Motor neuron (in vitro differentiated cells): ENCODE measurements at regions of chr6 and their contacts with region 1.

Region 1: DNA sequence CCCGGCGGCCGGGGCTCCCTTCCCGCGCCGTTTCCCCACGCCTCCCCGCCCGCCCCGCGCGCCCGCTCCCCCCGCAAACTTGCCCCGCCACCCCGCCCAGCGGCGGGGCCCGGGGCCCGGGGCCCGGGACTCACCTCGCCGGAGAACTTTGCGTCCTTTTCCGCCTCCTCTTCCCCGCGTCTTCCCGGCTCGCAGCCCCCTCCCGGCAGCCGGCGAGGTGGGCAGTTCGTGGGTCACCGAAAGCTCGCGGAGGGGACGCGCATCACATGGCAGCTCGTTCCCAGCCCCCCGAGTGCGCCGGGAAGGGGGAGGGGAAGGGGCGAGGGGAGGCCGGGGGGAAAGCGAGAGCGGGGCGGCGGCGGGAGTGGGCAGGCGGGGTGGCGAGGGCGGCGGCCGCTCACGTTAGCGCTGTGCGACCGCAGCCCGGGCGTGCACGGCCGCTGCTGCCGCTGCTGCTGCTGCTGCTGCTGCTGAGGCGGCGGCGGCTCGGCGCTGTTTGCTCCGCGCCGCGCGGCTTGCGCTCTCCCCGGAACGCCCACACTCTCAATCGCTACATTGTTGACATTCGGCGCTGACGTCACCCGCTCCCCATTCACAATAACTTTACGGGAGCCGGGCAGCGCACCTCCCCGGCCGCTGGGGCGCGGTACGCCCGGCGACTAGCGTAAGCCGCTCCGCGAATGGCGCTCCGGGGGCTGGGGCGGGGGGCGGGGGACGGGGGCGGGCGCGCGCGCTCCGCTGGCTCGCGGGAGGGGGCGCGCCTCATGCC is at the start of gene BACH2:
- ATAC-seq: peak; percentile 76 to 86 (median 80)
- H3K4me3 ChIP-seq: peak within 1 kb of the TSS; percentile 55 to 96 (median 85)
- H3K27ac ChIP-seq: peak within 1 kb of the TSS; percentile 79 to 94
- H3K4me1 ChIP-seq: peaks cover 29 to 45% of the 10 kb centered on the region in 2 donors
- total RNA-seq, gene BACH2: 0.25 to 34.3 (median 19.4) TPM

Region 2: GRCh38 chr6:89208551-89208950 is 1088.0 kb before region 1 on chr6:
- in situ Hi-C with region 1: no loop called
- ATAC-seq: no peak
- H3K4me3 ChIP-seq: no peak overlapping the region
- H3K27ac ChIP-seq: no peak overlapping the region
- H3K4me1 ChIP-seq: peaks cover 6 to 9% of the 10 kb centered on the region in 2 donors

Region 3: GRCh38 chr6:89940225-89941027 is 356.1 kb before region 1 on chr6:
- in situ Hi-C with region 1: loop called in 1 of 9 experiments (anchors 25 kb)
- ATAC-seq: peak; percentile 81 to 100 (median 96)
- H3K4me3 ChIP-seq: no peak overlapping the region
- H3K27ac ChIP-seq: peak overlapping the region in 1 of 2 donors; percentile 59
- H3K4me1 ChIP-seq: peaks cover 12 to 15% of the 10 kb centered on the region in 2 donors

Region 4: GRCh38 chr6:90383196-90383822 is 86.8 kb after region 1 on chr6:
- in situ Hi-C with region 1: loop called in 1 of 9 experiments (anchors 10 kb)
- ATAC-seq: no peak
- H3K4me3 ChIP-seq: no peak overlapping the region
- H3K27ac ChIP-seq: no peak overlapping the region
- H3K4me1 ChIP-seq: peaks cover 6 to 23% of the 10 kb centered on the region in 2 donors

Region 5: DNA sequence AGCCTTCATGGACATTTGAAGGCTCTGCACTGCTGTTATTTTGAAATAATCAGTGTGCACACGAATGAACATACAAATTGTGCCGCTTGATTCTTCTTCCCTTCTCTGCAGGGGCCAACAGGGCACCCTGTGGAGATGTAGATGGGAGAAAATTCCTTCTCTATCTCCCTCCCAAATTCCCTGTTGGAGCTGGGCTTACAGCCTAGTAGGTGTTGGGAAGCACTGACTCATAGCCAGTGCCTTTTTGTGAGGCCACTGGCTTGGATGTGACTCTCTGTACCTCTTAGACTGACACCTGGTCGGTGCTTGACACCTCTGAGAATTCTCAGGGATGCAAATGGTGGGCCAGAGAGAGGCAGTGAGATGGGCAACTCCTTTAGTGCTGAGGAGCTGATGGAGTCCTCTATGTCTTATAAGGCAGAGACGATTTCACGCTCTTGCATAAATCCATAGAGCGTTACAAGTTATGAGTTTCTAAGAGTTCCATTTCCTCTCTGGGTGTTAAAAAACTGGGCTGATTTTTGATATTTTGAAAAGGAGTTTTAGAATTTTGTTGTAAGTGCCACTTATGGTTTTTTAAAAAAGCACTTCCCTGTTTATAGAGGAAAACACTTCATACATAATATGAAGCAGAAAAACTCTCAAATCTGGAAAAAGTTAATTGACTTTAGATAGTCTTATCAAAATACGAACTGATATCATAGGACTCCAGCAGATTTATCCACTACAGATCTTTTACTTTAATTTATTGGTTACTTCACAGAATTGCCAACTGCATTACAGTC is 380.2 kb after region 1 on chr6:
- in situ Hi-C with region 1: no loop called
- ATAC-seq: no peak
- H3K4me3 ChIP-seq: no peak overlapping the region
- H3K27ac ChIP-seq: no peak overlapping the region
- H3K4me1 ChIP-seq: peaks cover 0 to 11% of the 10 kb centered on the region in 2 donors

Region 6: GRCh38 chr6:90715093-90715655 is 418.6 kb after region 1 on chr6:
- in situ Hi-C with region 1: no loop called
- ATAC-seq: no peak
- H3K4me3 ChIP-seq: no peak overlapping the region
- H3K27ac ChIP-seq: no peak overlapping the region
- H3K4me1 ChIP-seq: peaks cover 0 to 4% of the 10 kb centered on the region in 2 donors